Activated T-helper 1 cell treated with anti-CD3 and anti-CD28 coated beads, Interleukin-12 subunit alpha, Interleukin-12 subunit beta, Interleukin-2, Interleukin-4 antibody, amounts not matched to agents 30 ng/mL and 10 ng/mL and 1 ng/mL, durations not matched to agents 14 hours and 24 hours and 36 hours (primary cell): ENCODE measurements at regions of chr1 and their contacts with region 1.

Region 1: GRCh38 chr1:151008190-151008860 is at the start of gene PRUNE1:
- DNase-seq: peak; percentile 94
- H3K4me3 Mint-ChIP-seq: peak within 1 kb of the TSS; percentile 100
- H3K27ac Mint-ChIP-seq: peak within 1 kb of the TSS; percentile 96
- H3K4me1 Mint-ChIP-seq: peaks cover 79% of the 10 kb centered on the region
- H3K27me3 Mint-ChIP-seq: no peaks in the 10 kb centered on the region
- total RNA-seq, gene PRUNE1: 15.0 and 15.4 TPM in 2 replicates

Region 2: GRCh38 chr1:150363426-150364230 is 644.7 kb before region 1 on chr1 and contains the start of gene RPRD2:
- intact Hi-C with region 1: loop called (anchors 1 kb)
- DNase-seq: peak; percentile 99
- H3K4me3 Mint-ChIP-seq: peak within 1 kb of the TSS; percentile 99
- H3K27ac Mint-ChIP-seq: peak within 1 kb of the TSS; percentile 97
- H3K4me1 Mint-ChIP-seq: peaks cover 41% of the 10 kb centered on the region
- H3K27me3 Mint-ChIP-seq: no peaks in the 10 kb centered on the region
- total RNA-seq, gene RPRD2: 24.4 and 24.7 TPM in 2 replicates

Region 3: GRCh38 chr1:150876119-150876454 is 132.2 kb before region 1 on chr1:
- intact Hi-C with region 1: loop called (anchors 10 kb)
- DNase-seq: no peak
- H3K4me3 Mint-ChIP-seq: peak overlapping the region; percentile 86
- H3K27ac Mint-ChIP-seq: peak overlapping the region; percentile 88
- H3K4me1 Mint-ChIP-seq: peaks cover 34% of the 10 kb centered on the region
- H3K27me3 Mint-ChIP-seq: no peaks in the 10 kb centered on the region

Region 4: DNA sequence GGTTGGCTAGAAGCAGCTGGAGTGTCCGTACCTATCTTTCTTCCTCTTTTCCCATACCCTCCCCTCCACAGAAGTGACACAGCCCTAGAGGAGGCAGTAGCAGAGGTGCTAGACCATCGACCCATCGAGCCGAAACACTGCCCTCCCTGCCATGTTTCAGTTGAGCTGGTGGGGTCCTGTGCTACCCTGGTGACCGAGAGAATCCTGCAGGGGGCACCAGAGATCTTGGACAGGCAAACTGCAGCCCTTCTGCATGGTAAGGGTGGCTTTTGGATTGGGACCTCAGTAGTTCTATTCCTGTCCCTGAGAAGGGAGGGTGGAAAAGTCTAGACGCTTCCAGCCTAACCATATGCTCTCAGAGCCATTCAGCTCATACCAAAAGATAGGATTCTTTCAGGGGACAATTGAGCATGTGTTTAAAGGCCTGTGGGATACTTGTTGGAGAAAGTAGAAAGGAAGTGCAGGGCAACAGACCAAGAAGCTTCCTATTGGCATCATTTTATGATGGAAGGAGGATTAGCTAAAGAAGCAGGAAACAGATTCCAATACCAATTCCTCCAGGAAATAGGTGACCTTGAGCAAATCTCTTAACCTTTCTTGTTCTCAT is 16.3 kb after region 1 on chr1:
- intact Hi-C with region 1: loop called (anchors 2 kb)
- DNase-seq: peak; percentile 71
- H3K4me3 Mint-ChIP-seq: peak overlapping the region; percentile 26
- H3K27ac Mint-ChIP-seq: no peak overlapping the region
- H3K4me1 Mint-ChIP-seq: peaks cover 6% of the 10 kb centered on the region
- H3K27me3 Mint-ChIP-seq: no peaks in the 10 kb centered on the region

Region 5: GRCh38 chr1:151070474-151071276 is 62.4 kb after region 1 on chr1 and contains the start of gene GABPB2:
- intact Hi-C with region 1: loop called (anchors 1 kb)
- DNase-seq: peak; percentile 81
- H3K4me3 Mint-ChIP-seq: peak within 1 kb of the TSS; percentile 98
- H3K27ac Mint-ChIP-seq: peak within 1 kb of the TSS; percentile 100
- H3K4me1 Mint-ChIP-seq: peaks cover 17% of the 10 kb centered on the region
- H3K27me3 Mint-ChIP-seq: no peaks in the 10 kb centered on the region
- total RNA-seq, gene GABPB2: 19.4 and 21.5 TPM in 2 replicates